ENCODE measurements at regions of chr1 and their contacts with region 1.

Region 1: DNA sequence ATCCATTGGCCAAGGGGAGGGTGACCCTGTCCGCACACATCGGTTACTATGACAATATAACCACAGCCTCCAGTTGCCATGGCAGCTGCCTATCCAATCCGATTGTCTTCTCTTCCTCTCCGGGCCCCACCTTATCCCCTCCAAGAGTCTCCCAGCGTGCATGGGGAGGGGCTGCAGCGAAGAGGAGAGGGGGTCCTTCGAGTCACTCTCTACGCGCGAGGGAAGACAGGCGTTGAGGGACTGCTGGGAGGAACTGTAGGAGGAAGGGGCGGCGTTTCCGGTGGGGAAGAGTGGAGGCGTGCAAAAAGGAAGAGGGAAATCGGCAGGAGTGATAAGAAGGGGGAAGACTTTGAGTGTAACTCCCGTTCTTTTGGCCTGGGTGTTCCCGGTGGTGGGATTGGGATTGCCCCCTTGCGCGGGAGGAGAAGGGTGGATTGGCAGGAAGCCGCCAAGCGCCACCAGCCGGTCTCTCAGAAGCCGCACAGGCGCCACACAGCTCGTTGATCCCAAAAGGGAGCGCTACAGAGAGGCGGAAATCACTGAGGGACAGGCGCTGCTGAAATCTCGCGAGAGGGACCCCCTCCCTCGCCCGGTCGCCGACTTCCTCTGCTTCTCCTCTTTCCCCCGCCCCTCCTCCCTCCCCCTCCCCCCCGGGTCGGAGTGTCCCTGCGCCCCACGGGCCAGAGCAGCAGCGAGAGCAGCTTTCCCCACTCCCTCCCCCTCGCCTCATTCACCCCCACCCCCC is 384 bp upstream of the SMG7 start:
- DNase-seq: peak; percentile 91
- H3K4me3 Mint-ChIP-seq: peak overlapping the region; percentile 90
- H3K27ac Mint-ChIP-seq: peak overlapping the region; percentile 99
- H3K4me1 Mint-ChIP-seq: peaks cover 28% of the 10 kb centered on the region
- H3K27me3 Mint-ChIP-seq: peaks cover 2% of the 10 kb centered on the region

Region 2: DNA sequence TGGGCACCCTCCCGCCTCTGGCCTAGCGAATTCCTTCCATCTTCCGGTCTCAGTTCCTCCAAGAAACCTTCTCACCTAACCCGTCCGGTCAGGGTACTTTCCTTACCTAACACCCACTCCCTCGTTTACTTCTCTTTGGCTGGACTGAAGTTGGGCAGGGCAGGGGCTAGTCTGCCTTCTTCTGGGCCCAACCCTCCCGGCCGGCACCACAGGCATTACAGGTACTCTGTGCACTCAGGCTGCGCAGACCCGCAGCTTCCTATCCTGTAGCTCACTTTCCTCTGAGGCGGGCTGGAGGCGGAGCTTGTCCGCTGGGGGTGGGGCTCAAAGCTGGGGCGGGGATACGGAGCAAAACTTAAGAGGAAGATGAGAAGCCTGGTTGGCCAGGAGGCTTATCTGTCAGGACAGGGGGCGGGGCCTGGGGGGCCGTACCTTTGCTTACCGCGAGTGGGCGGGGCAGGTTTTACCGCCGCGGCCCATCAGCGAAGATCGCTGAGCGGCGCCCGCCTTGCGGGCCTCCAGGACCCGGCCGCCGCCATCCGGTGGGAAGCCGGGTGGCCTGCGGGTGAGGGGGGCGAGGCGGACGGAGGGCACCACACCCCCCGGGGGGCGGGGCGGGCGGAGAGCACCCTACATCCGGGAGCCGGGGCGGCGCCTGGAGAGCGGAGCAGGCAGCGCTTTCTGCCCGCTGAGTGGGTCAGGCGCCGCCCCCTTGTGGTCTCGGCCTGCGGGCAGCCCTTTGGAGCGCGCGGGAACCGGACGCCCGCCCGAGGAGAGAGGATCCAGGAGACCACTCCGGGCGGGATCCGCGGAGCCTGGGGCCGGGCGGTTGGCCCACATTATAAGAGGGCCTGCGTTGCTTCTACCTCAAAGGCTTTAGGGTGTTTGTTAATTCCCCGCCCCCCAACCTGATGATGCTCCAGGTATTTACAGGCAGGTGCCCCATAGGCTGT is 1442.3 kb before region 1 on chr1:
- intact Hi-C with region 1: loop called (anchors 2 kb)
- DNase-seq: peak; percentile 95
- H3K4me3 Mint-ChIP-seq: peak overlapping the region; percentile 91
- H3K27ac Mint-ChIP-seq: peak overlapping the region; percentile 94
- H3K4me1 Mint-ChIP-seq: peaks cover 12% of the 10 kb centered on the region
- H3K27me3 Mint-ChIP-seq: peaks cover 3% of the 10 kb centered on the region

Region 3: GRCh38 chr1:182839209-182840065 is 632.5 kb before region 1 on chr1 and contains the start of gene DHX9:
- intact Hi-C with region 1: loop called (anchors 2 kb)
- DNase-seq: peak; percentile 94
- H3K4me3 Mint-ChIP-seq: peak within 1 kb of the TSS; percentile 94
- H3K27ac Mint-ChIP-seq: peak within 1 kb of the TSS; percentile 98
- H3K4me1 Mint-ChIP-seq: peaks cover 47% of the 10 kb centered on the region
- H3K27me3 Mint-ChIP-seq: peaks cover 3% of the 10 kb centered on the region
- total RNA-seq, gene DHX9: 346 and 355 TPM in 2 replicates

Region 4: GRCh38 chr1:183622884-183623785 is 151.2 kb after region 1 on chr1:
- intact Hi-C with region 1: loop called (anchors 2 kb)
- DNase-seq: peak; percentile 38
- H3K4me3 Mint-ChIP-seq: no peak overlapping the region
- H3K27ac Mint-ChIP-seq: no peak overlapping the region
- H3K4me1 Mint-ChIP-seq: peaks cover 29% of the 10 kb centered on the region
- H3K27me3 Mint-ChIP-seq: no peaks in the 10 kb centered on the region

Region 5: GRCh38 chr1:183915625-183916510 is 444.0 kb after region 1 on chr1:
- intact Hi-C with region 1: loop called (anchors 10 kb)
- DNase-seq: peak; percentile 69
- H3K4me3 Mint-ChIP-seq: no peak overlapping the region
- H3K27ac Mint-ChIP-seq: peak overlapping the region; percentile 33
- H3K4me1 Mint-ChIP-seq: peaks cover 21% of the 10 kb centered on the region
- H3K27me3 Mint-ChIP-seq: no peaks in the 10 kb centered on the region

Region 6: DNA sequence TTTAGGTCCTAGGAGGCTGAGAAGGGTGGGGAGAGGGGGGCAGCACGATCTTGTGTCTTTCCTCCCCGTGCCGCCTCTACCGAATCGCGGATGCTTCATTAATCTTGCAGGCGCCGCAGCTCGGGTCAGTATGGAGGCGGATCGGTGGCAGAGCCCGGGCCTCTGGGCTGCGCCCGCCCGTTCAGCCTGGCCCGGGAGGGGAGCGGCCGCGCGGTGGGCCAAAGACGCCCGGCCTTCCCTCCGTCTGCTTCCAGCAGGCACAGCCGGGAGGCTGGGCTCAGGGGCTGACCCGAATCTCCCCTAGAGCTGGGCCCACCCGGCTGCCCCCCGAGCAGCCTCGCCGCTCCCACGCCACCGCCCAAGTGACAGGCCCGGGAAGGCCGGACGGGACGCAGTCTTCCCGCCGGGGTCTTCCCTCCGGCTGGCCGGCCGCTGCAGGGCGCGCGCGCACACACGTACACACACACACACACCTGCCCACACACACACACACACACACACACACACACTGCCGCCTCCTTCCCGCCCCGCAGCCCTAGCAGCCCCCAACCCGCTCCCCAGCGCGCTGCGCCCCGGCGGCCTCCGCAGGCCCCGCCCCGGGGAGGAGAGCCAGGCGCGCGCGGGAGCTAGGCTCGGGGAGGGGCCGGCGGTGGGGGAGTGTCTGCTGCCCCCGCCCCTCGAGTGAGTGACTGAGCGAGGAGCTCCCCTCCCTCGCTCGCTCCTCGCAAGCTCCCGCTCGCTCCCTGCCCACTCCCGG is 914.6 kb after region 1 on chr1 and contains the start of gene C1orf21:
- intact Hi-C with region 1: loop called (anchors 5 kb)
- DNase-seq: peak; percentile 75
- H3K4me3 Mint-ChIP-seq: peak within 1 kb of the TSS; percentile 86
- H3K27ac Mint-ChIP-seq: peak within 1 kb of the TSS; percentile 53
- H3K4me1 Mint-ChIP-seq: peaks cover 12% of the 10 kb centered on the region
- H3K27me3 Mint-ChIP-seq: peaks cover 71% of the 10 kb centered on the region
- total RNA-seq, gene C1orf21: 1.8 and 4.1 TPM in 2 replicates